ENCODE measurements at regions of chr15 and their contacts with region 1.

Region 1: DNA sequence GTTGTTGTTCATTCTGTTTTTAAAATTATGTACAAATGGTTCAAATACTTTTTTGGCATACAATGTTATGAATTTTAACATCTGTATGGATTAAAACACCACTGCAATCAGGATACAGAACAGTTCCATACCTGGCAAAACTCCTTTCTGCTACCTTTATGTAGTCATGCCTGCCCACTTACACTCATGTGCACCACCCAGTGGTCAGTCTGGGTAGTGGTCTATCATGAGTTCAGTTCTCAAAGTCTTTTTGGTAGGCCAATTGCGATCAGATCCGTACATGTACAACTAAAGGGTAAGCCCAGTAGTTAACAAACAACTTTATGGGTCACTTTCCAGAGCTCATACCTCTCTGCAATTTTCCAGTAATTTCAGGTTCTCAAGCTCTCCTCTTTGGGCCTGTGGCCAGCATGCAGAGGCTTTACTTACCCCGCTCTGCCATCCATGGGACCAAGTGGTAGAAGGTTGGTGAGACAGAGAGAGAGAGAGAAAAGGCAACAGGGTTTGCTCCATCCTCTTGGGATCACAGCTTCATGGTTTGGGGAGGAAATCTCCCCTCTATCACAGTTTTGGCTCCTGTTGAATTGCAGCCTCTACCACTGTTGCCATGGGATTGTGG is 63.9 kb upstream of the FAM98B start:
- DNase-seq: no peak
- H3K4me3 ChIP-seq: no peak overlapping the region
- CTCF ChIP-seq: peak; percentile 76

Region 2: GRCh38 chr15:38367476-38367875 is 22.6 kb before region 1 on chr15:
- CTCF ChIA-PET with region 1: interaction called, 10 read pairs
- POLR2A ChIA-PET with region 1: no interaction called
- DNase-seq: peak; percentile 24
- H3K4me3 ChIP-seq: no peak overlapping the region
- CTCF ChIP-seq: no peak

Region 3: GRCh38 chr15:38378161-38378560 is 11.9 kb before region 1 on chr15:
- CTCF ChIA-PET with region 1: interaction called, 85 read pairs
- POLR2A ChIA-PET with region 1: no interaction called
- DNase-seq: no peak
- H3K4me3 ChIP-seq: no peak overlapping the region
- CTCF ChIP-seq: no peak

Region 4: DNA sequence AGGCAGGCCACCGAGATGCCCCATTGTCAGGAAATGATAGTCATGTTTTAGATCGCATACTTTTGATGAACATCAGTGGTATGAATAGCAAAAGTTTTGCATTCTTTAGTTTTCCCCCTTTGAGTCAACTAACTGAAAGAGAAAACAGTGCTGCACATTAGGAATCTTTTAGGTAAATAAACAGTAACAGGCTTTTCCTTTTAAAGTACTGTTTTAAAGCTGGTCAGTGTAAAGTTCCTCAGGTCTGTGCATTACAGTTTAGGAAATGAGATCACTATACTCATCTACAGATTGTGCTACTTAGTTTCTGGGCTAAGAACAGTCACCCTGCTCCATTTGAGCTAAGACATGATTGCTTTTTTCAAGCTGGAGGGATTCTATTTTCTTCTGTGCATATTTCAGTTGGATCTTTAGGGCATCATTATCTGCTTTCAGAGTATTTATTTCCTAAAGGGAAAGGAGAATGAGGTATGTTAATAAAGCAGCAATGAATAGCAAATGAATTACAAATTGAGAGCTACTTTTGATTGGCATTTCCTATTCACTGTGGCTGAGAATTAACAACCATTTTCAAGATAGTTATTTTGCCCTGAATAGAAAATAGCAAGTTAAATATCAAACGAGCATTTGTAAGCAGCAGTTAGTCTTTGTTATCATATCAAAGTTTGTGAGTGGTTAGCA is 100.3 kb after region 1 on chr15:
- CTCF ChIA-PET with region 1: no interaction called
- POLR2A ChIA-PET with region 1: no interaction called
- DNase-seq: peak; percentile 80
- H3K4me3 ChIP-seq: no peak overlapping the region
- CTCF ChIP-seq: no peak

Region 5: DNA sequence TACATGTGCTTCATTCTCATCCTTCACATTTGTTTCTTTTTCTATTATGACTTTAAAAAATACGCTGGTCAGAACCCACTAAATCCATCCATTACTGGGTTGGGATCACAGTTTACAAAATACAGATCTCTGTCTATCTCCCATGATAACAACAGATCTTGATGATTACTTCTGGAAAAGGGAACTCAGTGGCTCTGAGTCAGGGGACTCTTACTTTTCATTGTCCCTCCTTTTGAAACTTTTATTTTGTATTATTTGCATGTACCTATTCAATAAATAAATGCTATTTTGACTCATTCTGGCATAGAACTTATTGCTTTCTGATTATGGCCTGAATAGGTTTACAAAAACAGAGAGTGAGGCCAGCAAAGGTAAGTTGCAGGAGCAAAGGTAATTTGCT is 186.2 kb after region 1 on chr15:
- CTCF ChIA-PET with region 1: no interaction called
- POLR2A ChIA-PET with region 1: no interaction called
- DNase-seq: no peak
- H3K4me3 ChIP-seq: no peak overlapping the region
- CTCF ChIP-seq: no peak

Measured in AG04449 (cell line).